ENCODE measurements at regions of chr6 and their contacts with region 1.

Region 1: GRCh38 chr6:27295301-27296081 is 16.6 kb downstream of the POM121L2 start:
- DNase-seq: peak; percentile 59 to 71
- H3K4me3 ChIP-seq: peak overlapping the region; percentile 41
- H3K4me3 Mint-ChIP-seq: peak overlapping the region; percentile 97
- H3K27ac Mint-ChIP-seq: peak overlapping the region; percentile 77
- H3K4me1 ChIP-seq: 0 out of 2 replicates have a peak, but pooled peaks cover 5% of the 10 kb centered on the region
- H3K4me1 Mint-ChIP-seq: peaks cover 16% of the 10 kb centered on the region
- H3K27me3 ChIP-seq: no peaks in the 10 kb centered on the region
- H3K27me3 Mint-ChIP-seq: peaks cover 7% of the 10 kb centered on the region
- CTCF ChIP-seq: no peak

Region 2: DNA sequence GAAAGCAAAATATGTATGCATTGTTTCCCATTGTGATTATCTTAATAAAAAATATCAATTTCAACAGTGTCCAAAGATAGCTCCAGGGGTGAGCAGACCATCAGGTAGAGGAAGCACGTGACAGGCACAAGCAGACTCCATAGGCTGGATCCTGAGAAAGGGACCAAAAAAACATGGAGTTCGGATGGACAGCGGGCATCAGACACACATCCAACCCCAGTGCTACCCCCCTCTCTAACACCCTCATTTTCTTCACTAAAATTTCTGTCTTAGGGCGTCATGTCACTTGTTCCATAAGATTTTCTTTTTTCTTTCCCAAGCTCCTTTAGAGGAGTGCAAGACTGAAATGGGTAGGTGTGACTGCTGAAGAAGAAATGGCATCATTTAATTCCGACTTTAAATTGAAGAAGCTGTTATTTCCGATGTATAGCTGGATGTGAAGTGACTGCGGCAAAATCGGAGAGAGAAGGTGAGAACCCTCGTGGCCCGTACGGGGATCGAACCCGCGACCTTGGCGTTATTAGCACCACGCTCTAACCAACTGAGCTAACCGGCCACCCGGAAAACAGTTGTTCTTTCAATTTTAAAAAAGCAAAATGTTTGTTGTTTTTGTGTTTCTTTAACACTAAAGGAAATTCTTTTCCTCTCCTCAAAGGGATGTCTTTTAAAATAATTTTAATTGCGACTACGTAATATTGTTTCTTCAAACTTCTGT is 58.2 kb before region 1 on chr6:
- CTCF ChIA-PET with region 1: no interaction called
- POLR2A ChIA-PET with region 1: no interaction called
- intact Hi-C with region 1: loop called (anchors 2 kb)
- DNase-seq: peak in 1 of 2 experiments; percentile 36
- H3K4me3 ChIP-seq: no peak overlapping the region
- H3K4me3 Mint-ChIP-seq: peak overlapping the region; percentile 59
- H3K27ac Mint-ChIP-seq: peak overlapping the region; percentile 56
- H3K4me1 ChIP-seq: 0 out of 2 replicates have a peak, but pooled peaks cover 4% of the 10 kb centered on the region
- H3K4me1 Mint-ChIP-seq: peaks cover 9% of the 10 kb centered on the region
- H3K27me3 ChIP-seq: no peaks in the 10 kb centered on the region
- H3K27me3 Mint-ChIP-seq: no peaks in the 10 kb centered on the region
- CTCF ChIP-seq: no peak

Region 3: GRCh38 chr6:27280064-27280539 is 15.4 kb before region 1 on chr6:
- CTCF ChIA-PET with region 1: no interaction called
- POLR2A ChIA-PET with region 1: interaction called, 9 read pairs
- intact Hi-C with region 1: loop called (anchors 1 kb)
- DNase-seq: peak; percentile 57 to 66
- H3K4me3 ChIP-seq: peak overlapping the region; percentile 42
- H3K4me3 Mint-ChIP-seq: peak overlapping the region; percentile 86
- H3K27ac Mint-ChIP-seq: peak overlapping the region; percentile 67
- H3K4me1 ChIP-seq: no peaks in the 10 kb centered on the region
- H3K4me1 Mint-ChIP-seq: peaks cover 6% of the 10 kb centered on the region
- H3K27me3 ChIP-seq: no peaks in the 10 kb centered on the region
- H3K27me3 Mint-ChIP-seq: no peaks in the 10 kb centered on the region
- CTCF ChIP-seq: no peak

Region 4: DNA sequence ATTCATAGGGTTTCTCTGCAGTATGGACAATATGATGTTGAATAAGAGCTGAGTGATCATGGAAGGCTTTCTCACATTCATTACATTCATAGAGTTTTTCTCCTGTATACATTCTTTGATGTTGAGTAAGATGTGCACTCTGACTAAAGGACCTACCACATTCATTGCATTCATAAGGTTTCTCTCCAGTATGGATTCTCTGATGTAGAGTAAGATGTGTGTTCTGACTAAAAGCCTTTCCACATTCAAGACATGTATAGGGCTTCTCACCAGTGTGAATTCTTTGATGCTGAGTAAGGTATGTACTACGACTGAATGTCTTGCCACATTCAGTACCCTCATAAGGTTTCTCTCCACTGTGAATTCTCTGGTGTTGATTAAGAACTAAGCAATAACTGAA is 63.7 kb after region 1 on chr6:
- CTCF ChIA-PET with region 1: no interaction called
- POLR2A ChIA-PET with region 1: no interaction called
- intact Hi-C with region 1: no loop called
- DNase-seq: no peak
- H3K4me3 ChIP-seq: no peak overlapping the region
- H3K4me3 Mint-ChIP-seq: no peak overlapping the region
- H3K27ac Mint-ChIP-seq: no peak overlapping the region
- H3K4me1 ChIP-seq: no peaks in the 10 kb centered on the region
- H3K4me1 Mint-ChIP-seq: no peaks in the 10 kb centered on the region
- H3K27me3 ChIP-seq: no peaks in the 10 kb centered on the region
- H3K27me3 Mint-ChIP-seq: no peaks in the 10 kb centered on the region
- CTCF ChIP-seq: no peak

Region 5: DNA sequence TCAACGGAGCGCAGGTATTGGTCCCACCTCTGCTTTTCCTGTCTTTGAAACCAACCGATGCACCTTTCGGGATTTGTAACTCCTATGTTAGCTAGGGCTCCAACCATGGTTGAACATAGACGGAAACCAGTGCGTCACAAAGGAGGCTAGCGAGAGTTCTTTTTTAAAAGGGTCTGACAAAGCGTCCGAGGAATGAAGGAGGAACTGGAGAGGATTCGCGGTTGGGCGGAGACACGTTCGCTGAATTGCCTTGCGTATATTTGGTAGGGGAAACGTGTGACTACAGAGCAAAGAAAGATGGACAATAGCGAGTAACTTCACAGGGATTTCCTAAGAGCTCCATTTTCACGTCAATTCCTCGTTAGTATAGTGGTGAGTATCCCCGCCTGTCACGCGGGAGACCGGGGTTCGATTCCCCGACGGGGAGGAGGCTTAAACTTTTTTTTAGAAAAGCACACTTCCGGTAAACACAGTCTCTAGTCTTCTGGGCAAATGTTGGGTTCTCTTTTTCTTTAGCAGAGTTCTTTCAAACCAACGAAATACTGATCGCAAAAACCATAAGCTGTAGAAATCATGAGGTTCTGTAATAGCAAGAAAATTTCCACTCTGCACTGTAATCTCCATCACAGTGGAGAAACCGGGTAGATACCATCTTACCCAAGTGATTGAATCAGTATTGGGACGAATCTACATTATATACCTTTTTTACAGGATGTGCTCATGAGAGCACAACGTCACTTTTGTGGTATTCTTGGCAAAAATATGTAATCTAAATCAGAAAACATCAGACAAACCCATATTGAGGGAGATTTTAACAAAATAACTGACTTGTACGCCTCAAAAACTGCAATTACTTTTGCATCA is 184.1 kb after region 1 on chr6:
- CTCF ChIA-PET with region 1: no interaction called
- POLR2A ChIA-PET with region 1: no interaction called
- intact Hi-C with region 1: loop called (anchors 2 kb)
- DNase-seq: peak; percentile 62 to 87
- H3K4me3 ChIP-seq: peak overlapping the region; percentile 52
- H3K4me3 Mint-ChIP-seq: no peak overlapping the region
- H3K27ac Mint-ChIP-seq: no peak overlapping the region
- H3K4me1 ChIP-seq: no peaks in the 10 kb centered on the region
- H3K4me1 Mint-ChIP-seq: no peaks in the 10 kb centered on the region
- H3K27me3 ChIP-seq: no peaks in the 10 kb centered on the region
- H3K27me3 Mint-ChIP-seq: no peaks in the 10 kb centered on the region
- CTCF ChIP-seq: no peak

Region 6: GRCh38 chr6:27608916-27609883 is 313.7 kb after region 1 on chr6:
- CTCF ChIA-PET with region 1: no interaction called
- POLR2A ChIA-PET with region 1: no interaction called
- intact Hi-C with region 1: loop called (anchors 5 kb)
- DNase-seq: peak in 1 of 2 experiments; percentile 69
- H3K4me3 ChIP-seq: no peak overlapping the region
- H3K4me3 Mint-ChIP-seq: no peak overlapping the region
- H3K27ac Mint-ChIP-seq: no peak overlapping the region
- H3K4me1 ChIP-seq: no peaks in the 10 kb centered on the region
- H3K4me1 Mint-ChIP-seq: peaks cover 9% of the 10 kb centered on the region
- H3K27me3 ChIP-seq: no peaks in the 10 kb centered on the region
- H3K27me3 Mint-ChIP-seq: peaks cover 2% of the 10 kb centered on the region
- CTCF ChIP-seq: peak; percentile 61 to 79